ENCODE measurements at regions of chr1 and their contacts with region 1.

Region 1: GRCh38 chr1:29793101-29793546 is 556.8 kb downstream of the PTPRU start:
- DNase-seq: peak; percentile 89
- H3K4me3 Mint-ChIP-seq: no peak overlapping the region
- H3K27ac Mint-ChIP-seq: no peak overlapping the region
- H3K4me1 Mint-ChIP-seq: no peaks in the 10 kb centered on the region
- H3K27me3 Mint-ChIP-seq: peaks cover 5% of the 10 kb centered on the region

Region 2: GRCh38 chr1:29698033-29698432 is 95.1 kb before region 1 on chr1:
- CTCF ChIA-PET with region 1: no interaction called
- intact Hi-C with region 1: no loop called
- DNase-seq: no peak
- H3K4me3 Mint-ChIP-seq: no peak overlapping the region
- H3K27ac Mint-ChIP-seq: no peak overlapping the region
- H3K4me1 Mint-ChIP-seq: no peaks in the 10 kb centered on the region
- H3K27me3 Mint-ChIP-seq: peaks cover 16% of the 10 kb centered on the region

Region 3: GRCh38 chr1:29849038-29849750 is 56.1 kb after region 1 on chr1:
- CTCF ChIA-PET with region 1: no interaction called
- intact Hi-C with region 1: loop called (anchors 2 kb)
- DNase-seq: peak; percentile 68
- H3K4me3 Mint-ChIP-seq: no peak overlapping the region
- H3K27ac Mint-ChIP-seq: no peak overlapping the region
- H3K4me1 Mint-ChIP-seq: no peaks in the 10 kb centered on the region
- H3K27me3 Mint-ChIP-seq: peaks cover 20% of the 10 kb centered on the region

Region 4: GRCh38 chr1:30707412-30708360 is 914.6 kb after region 1 on chr1:
- CTCF ChIA-PET with region 1: no interaction called
- intact Hi-C with region 1: loop called (anchors 1 kb)
- DNase-seq: peak; percentile 82
- H3K4me3 Mint-ChIP-seq: no peak overlapping the region
- H3K27ac Mint-ChIP-seq: no peak overlapping the region
- H3K4me1 Mint-ChIP-seq: no peaks in the 10 kb centered on the region
- H3K27me3 Mint-ChIP-seq: no peaks in the 10 kb centered on the region